Vagina (tissue), 2 donors: ENCODE measurements at regions of chr5 and their contacts with region 1.

Region 1: DNA sequence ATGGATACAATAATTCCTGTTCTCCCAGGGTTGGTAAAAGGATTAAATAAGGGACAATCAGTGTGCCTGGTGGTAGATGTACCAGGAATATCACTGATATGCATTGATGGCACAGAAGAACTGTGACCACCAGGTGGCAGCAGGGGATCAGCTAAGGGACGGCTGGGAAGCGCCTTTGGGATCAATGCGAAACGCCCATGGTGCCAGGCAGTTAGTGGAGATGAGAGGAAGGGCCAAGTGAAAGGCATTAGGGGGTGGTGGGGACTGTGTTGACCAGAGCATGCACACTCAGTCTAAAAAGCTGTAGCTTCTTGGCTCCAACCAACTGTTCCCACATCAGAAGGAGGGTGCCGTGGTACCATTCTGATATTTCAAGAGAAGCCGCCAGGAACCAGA is 55.6 kb downstream of the ARHGEF37 start:
- DNase-seq: no peak
- H3K4me3 ChIP-seq: no peak overlapping the region
- H3K27ac ChIP-seq: no peak overlapping the region
- H3K4me1 ChIP-seq: peaks cover 35% of the 10 kb centered on the region
- H3K27me3 ChIP-seq: no peaks in the 10 kb centered on the region
- CTCF ChIP-seq: peak; percentile 75 to 93 (median 87)
- POLR2A ChIP-seq: no peak

Region 2: GRCh38 chr5:149497357-149497756 is 139.5 kb before region 1 on chr5:
- intact Hi-C with region 1: no loop called
- DNase-seq: no peak
- H3K4me3 ChIP-seq: no peak overlapping the region
- H3K27ac ChIP-seq: peak overlapping the region; percentile 40
- H3K4me1 ChIP-seq: peaks cover 6% of the 10 kb centered on the region
- H3K27me3 ChIP-seq: no peaks in the 10 kb centered on the region
- CTCF ChIP-seq: no peak
- POLR2A ChIP-seq: no peak

Region 3: GRCh38 chr5:149596713-149597112 is 40.1 kb before region 1 on chr5:
- intact Hi-C with region 1: no loop called
- DNase-seq: no peak
- H3K4me3 ChIP-seq: no peak overlapping the region
- H3K27ac ChIP-seq: peak overlapping the region; percentile 49
- H3K4me1 ChIP-seq: peaks cover 16% of the 10 kb centered on the region
- H3K27me3 ChIP-seq: no peaks in the 10 kb centered on the region
- CTCF ChIP-seq: no peak
- POLR2A ChIP-seq: no peak

Region 4: GRCh38 chr5:149824846-149825245 is 188.0 kb after region 1 on chr5:
- intact Hi-C with region 1: loop called (anchors 2 kb)
- DNase-seq: no peak
- H3K4me3 ChIP-seq: no peak overlapping the region
- H3K27ac ChIP-seq: peak overlapping the region; percentile 61
- H3K4me1 ChIP-seq: peaks cover 30% of the 10 kb centered on the region
- H3K27me3 ChIP-seq: no peaks in the 10 kb centered on the region
- CTCF ChIP-seq: no peak
- POLR2A ChIP-seq: no peak

Region 5: DNA sequence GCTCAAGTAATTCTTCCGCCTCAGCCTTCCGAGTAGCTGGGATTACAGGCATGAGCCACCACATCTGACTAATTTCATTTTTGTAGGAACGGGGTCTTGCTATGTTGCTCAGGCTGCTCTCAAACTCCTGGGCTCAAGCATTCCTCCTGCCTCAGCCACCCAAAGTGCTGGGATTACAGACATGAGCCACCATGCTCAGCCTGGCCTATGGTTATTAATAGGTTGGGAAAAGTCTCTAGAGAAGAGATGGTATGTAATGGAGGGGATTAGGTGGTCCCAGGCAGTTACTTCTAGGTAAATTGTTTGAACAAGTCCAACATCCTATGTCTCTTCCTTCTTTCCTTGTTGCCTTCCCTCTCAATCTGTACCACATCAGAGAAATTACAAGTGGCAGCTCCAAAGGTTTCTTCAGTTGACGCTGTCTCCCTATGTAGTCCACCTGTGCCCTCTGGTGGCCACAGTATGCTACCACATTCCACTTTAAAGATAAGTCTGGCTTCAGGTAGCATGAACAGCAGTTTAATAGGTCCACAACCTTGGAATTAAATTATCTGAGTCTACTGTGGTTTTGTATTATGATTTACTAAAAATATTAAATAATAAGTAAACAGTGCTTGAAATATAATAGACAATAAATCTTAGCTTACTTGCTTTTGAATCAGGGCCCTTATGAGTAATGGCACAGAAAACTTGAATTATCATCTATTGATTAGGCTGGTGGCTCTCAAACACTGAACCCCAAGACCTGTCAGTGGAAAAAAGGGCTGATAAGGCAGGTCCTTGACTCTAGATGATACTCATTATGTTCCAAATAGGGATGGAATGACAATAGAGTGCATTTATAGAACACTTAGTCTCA is 353.9 kb after region 1 on chr5:
- intact Hi-C with region 1: loop called (anchors 10 kb)
- DNase-seq: no peak
- H3K4me3 ChIP-seq: no peak overlapping the region
- H3K27ac ChIP-seq: no peak overlapping the region
- H3K4me1 ChIP-seq: peaks cover 6% of the 10 kb centered on the region
- H3K27me3 ChIP-seq: no peaks in the 10 kb centered on the region
- CTCF ChIP-seq: peak; percentile 78 to 94 (median 90)
- POLR2A ChIP-seq: no peak